ENCODE measurements at regions of chr11 and their contacts with region 1.

Region 1: DNA sequence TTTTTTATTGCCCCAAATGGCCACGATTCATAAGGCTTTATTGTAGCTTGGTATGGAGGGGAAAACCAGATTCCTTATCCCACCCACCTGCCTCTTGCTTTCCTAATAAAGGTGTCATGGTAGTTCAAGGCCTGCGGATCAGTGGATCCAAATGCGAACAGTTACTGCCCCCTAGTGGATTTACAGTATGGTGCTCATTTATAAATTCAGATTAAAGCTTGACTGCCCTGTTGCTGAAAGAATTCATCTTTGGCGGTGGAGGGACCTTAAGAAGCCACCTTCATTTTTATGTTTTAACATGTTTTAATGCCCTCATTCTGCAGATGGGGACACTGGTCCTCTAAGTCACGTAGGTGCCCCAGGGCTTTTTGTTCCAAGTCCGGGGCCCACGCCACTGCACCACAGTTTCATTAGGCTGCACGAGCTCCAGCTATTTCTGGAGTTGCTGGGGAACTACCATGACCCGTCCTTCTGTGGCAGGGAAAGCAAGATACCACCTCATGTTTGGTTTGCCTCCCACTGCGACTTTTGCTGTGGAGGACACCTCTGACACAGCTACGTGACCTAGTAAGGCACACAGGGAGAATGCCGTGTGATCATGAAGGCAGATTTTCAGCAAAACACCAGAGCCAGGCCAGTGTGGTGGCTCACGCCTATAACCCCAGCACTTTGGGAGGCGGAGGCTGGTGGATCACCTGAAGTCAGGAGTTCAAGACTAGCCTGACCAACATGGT is 15.6 kb upstream of the INCENP start:
- DNase-seq: peak; percentile 59
- CTCF ChIP-seq: peak; percentile 69

Region 2: DNA sequence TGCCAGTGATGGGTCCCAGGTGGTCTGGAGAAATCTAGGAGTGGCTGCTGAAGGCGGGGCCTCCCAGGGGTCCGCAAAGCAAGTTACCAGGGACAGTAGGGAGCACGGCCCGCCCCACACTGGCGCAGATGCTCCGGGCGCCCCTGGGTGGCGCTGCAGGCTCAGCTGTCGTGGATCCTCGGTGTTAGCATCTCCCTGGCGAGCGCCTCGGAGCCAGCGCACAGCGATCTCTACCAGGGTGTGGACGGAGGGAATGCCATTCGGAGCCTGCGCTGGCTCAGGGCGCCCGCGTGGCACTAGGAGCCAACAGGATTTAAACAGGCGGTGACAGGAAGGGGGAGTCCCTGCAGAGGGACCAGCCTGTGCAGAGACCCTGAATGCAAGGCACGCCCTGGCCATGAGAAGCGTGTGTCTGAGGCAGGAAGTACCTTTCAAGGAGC is 237.0 kb before region 1 on chr11:
- in situ Hi-C with region 1: no loop called
- DNase-seq: peak; percentile 90
- CTCF ChIP-seq: peak; percentile 95

Region 3: GRCh38 chr11:61899146-61899841 is 208.9 kb before region 1 on chr11:
- in situ Hi-C with region 1: loop called (anchors 10 kb)
- DNase-seq: peak; percentile 97
- CTCF ChIP-seq: peak; percentile 100

Measured in GM13976 (cell line).